ENCODE measurements at regions of chr6 and their contacts with region 1.

Region 1: DNA sequence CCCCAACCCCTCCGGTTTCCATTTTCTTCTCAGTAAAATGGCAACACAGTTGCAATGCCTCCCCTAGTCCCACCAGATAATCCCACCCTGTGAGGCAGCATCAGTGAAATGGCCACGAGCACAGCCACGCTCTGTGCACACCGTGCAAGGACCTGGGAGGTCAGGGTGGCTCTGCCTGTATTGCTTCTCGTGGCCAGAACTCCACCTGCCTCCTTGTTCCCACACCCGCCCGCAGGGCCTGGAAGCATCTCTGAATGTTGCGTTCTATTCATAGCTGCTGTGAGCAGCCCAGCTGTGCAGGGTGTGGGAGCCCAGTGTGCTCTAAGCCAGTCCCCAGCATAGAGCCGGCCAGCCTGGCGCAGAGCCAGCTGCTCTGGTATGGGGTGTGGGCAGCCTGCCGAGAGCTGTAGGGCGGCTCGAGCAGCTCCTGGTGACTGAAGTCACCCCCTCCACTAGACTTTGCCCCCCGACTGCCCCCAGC is 161.1 kb downstream of the DLL1 start:
- DNase-seq: peak; percentile 42
- H3K4me3 ChIP-seq: no peak overlapping the region
- H3K27ac ChIP-seq: no peak overlapping the region
- H3K4me1 ChIP-seq: peaks cover 8% of the 10 kb centered on the region
- H3K27me3 ChIP-seq: no peaks in the 10 kb centered on the region
- CTCF ChIP-seq: no peak

Region 2: DNA sequence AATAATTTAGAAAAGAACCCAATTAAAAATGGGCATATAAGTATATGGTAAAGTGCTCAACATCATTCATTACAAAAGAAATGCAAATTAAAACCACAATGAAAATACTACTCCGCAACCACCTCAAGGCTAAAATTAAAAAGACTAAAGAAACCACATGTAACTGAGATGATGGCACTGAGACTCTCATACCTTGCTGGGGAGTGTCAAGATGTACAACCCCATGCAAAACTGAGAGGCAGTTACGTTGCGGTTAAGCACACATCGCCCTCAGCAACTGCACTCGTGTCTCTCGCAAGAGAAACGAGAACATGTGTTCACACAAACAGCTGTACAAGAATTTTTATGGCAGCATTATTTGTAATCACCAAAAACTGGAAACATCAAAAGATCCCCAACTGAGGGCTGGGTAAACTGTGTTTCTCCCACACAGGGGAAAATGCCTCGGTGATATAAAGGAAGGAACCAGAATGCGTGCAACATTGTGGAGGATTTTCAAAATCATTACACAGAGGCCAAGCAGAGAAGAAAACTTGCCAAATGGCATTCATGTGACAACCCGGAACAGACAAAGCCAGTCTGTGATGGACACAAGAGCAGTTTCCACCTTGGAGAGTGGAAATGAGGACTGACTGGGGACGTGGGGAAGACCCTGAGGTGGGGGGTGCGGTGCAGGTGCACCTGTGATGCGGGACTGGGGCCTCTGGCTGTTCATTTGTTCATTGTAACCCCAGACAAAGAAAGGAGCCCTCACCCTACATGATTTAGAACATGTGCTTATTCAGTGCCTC is 572.8 kb before region 1 on chr6:
- CTCF ChIA-PET with region 1: no interaction called
- dilution Hi-C with region 1: no loop called
- in situ Hi-C with region 1: no loop called
- intact Hi-C with region 1: no loop called
- DNase-seq: no peak
- H3K4me3 ChIP-seq: no peak overlapping the region
- H3K27ac ChIP-seq: no peak overlapping the region
- H3K4me1 ChIP-seq: no peaks in the 10 kb centered on the region
- H3K27me3 ChIP-seq: no peaks in the 10 kb centered on the region
- CTCF ChIP-seq: no peak

Region 3: GRCh38 chr6:170025935-170026750 is 103.6 kb before region 1 on chr6:
- CTCF ChIA-PET with region 1: no interaction called
- dilution Hi-C with region 1: no loop called
- in situ Hi-C with region 1: no loop called
- intact Hi-C with region 1: loop called (anchors 2 kb)
- DNase-seq: peak; percentile 96
- H3K4me3 ChIP-seq: no peak overlapping the region
- H3K27ac ChIP-seq: peak overlapping the region; percentile 74
- H3K4me1 ChIP-seq: peaks cover 25% of the 10 kb centered on the region
- H3K27me3 ChIP-seq: no peaks in the 10 kb centered on the region
- CTCF ChIP-seq: no peak